Endothelial cell of umbilical vein (primary cell): ENCODE measurements at regions of chr19 and their contacts with region 1.

Region 1: GRCh38 chr19:2151339-2152229 is at the start of gene AP3D1:
- DNase-seq: peak; percentile 100
- H3K4me3 ChIP-seq: peak within 1 kb of the TSS; percentile 60 to 96 (median 61)
- H3K27ac ChIP-seq: peak within 1 kb of the TSS; percentile 75
- H3K4me1 ChIP-seq: peaks cover 8% of the 10 kb centered on the region
- H3K27me3 ChIP-seq: no peaks in the 10 kb centered on the region
- CTCF ChIP-seq: no peak
- POLR2A ChIP-seq: no peak
- total RNA-seq, gene AP3D1: 137 and 143 TPM in 2 replicates

Region 2: DNA sequence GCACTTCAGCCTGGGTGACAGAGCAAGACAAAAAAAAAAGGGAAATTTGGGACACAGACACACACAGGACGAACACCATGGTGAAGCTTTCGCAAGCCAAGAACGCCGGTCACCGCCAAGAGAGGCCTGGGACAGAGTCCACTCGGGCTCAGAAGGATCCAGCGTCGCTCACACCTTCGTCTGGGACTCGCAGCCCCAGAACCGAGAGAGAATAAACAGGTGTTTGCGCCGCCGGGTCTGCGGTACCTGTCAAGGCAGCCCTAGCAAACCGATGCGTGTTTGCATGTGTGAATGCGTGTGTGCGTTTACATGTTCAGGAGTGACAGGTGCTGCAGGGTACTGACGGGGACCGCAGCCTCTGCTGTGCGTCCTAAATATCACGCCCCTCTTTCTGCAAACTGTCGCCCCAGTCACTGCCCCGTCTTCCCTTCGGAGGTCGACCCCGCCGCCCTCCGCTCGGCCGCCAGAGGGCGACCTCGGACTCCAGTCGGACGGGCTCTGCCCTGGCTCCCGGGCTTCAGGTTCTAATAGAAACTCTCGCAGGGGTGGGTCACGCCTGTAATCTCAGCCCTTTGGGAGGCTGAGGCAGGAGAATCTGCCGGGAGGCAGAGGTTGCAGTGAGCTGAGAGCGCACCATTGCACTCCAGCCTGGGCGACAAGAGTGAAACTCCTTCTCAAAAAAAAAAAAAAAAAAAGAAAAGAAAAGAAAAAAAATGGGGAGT is 222.4 kb before region 1 on chr19:
- CTCF ChIA-PET with region 1: interaction called, 3 read pairs
- POLR2A ChIA-PET with region 1: no interaction called
- dilution Hi-C with region 1: no loop called
- intact Hi-C with region 1: loop called (anchors 2 kb)
- DNase-seq: peak; percentile 64
- H3K4me3 ChIP-seq: peak overlapping the region in 2 of 3 experiments; percentile 23 to 26
- H3K27ac ChIP-seq: no peak overlapping the region
- H3K4me1 ChIP-seq: peaks cover 4% of the 10 kb centered on the region
- H3K27me3 ChIP-seq: no peaks in the 10 kb centered on the region
- CTCF ChIP-seq: peak; percentile 82 to 97
- POLR2A ChIP-seq: no peak

Region 3: GRCh38 chr19:2186071-2186846 is 34.7 kb after region 1 on chr19:
- CTCF ChIA-PET with region 1: interaction called, 13 read pairs
- POLR2A ChIA-PET with region 1: no interaction called
- dilution Hi-C with region 1: no loop called
- intact Hi-C with region 1: no loop called
- DNase-seq: peak; percentile 84
- H3K4me3 ChIP-seq: no peak overlapping the region
- H3K27ac ChIP-seq: peak overlapping the region; percentile 13
- H3K4me1 ChIP-seq: peaks cover 10% of the 10 kb centered on the region
- H3K27me3 ChIP-seq: no peaks in the 10 kb centered on the region
- CTCF ChIP-seq: no peak
- POLR2A ChIP-seq: no peak

Region 4: GRCh38 chr19:2221918-2222317 is 70.3 kb after region 1 on chr19:
- CTCF ChIA-PET with region 1: interaction called, 33 read pairs
- POLR2A ChIA-PET with region 1: no interaction called
- dilution Hi-C with region 1: no loop called
- intact Hi-C with region 1: no loop called
- DNase-seq: no peak
- H3K4me3 ChIP-seq: no peak overlapping the region
- H3K27ac ChIP-seq: no peak overlapping the region
- H3K4me1 ChIP-seq: no peaks in the 10 kb centered on the region
- H3K27me3 ChIP-seq: no peaks in the 10 kb centered on the region
- CTCF ChIP-seq: peak in 1 of 2 donors; percentile 20
- POLR2A ChIP-seq: no peak

Region 5: DNA sequence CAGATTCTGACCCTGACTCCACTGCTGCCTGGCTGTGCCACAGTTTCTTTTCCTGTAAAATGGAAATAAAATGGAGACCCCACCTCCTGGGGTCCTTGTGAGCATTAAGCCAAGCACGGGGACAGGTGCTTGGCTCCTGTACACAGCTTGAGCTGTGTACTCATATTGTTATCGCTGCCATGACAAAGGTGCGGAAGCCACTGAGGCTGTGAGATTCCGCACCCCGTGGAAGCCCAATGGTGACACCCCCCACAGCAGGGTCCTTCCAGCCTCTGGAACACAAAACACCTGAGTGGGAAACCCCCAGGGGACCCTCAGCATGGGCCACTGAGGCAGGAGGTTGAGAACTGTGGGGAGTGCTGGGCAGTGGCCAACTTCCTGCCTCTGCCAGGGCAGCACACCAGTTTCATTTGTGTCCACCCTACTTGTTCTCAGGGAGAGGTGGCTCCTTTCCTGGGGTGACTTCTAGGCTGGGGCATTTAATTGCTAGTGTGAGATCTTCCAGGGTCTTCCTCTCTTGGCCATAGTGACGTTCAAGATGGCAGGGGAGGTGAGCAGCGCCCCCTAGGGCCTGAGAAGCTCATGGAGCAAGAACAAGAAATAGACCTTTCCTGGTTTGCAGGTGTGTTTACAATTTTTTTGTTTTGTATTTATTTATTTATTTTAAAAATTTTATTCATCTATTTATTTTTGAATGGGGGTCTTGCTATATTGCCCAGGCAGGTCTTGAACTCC is 110.0 kb after region 1 on chr19:
- CTCF ChIA-PET with region 1: interaction called, 16 read pairs
- POLR2A ChIA-PET with region 1: no interaction called
- dilution Hi-C with region 1: no loop called
- intact Hi-C with region 1: no loop called
- DNase-seq: peak; percentile 49
- H3K4me3 ChIP-seq: no peak overlapping the region
- H3K27ac ChIP-seq: no peak overlapping the region
- H3K4me1 ChIP-seq: peaks cover 4% of the 10 kb centered on the region
- H3K27me3 ChIP-seq: no peaks in the 10 kb centered on the region
- CTCF ChIP-seq: peak; percentile 70
- POLR2A ChIP-seq: no peak

Region 6: GRCh38 chr19:2391118-2391725 is 239.6 kb after region 1 on chr19:
- CTCF ChIA-PET with region 1: interaction called, 12 read pairs
- POLR2A ChIA-PET with region 1: no interaction called
- dilution Hi-C with region 1: no loop called
- intact Hi-C with region 1: loop called (anchors 2 kb)
- DNase-seq: peak; percentile 73
- H3K4me3 ChIP-seq: no peak overlapping the region
- H3K27ac ChIP-seq: no peak overlapping the region
- H3K4me1 ChIP-seq: no peaks in the 10 kb centered on the region
- H3K27me3 ChIP-seq: peaks cover 3 to 4% of the 10 kb centered on the region in 2 experiments
- CTCF ChIP-seq: peak; percentile 60 to 67
- POLR2A ChIP-seq: no peak